ENCODE measurements at regions of chr17 and their contacts with region 1.

Region 1: GRCh38 chr17:43710101-43710500 is 48.4 kb upstream of the MEOX1 start:
- DNase-seq: no peak

Region 2: DNA sequence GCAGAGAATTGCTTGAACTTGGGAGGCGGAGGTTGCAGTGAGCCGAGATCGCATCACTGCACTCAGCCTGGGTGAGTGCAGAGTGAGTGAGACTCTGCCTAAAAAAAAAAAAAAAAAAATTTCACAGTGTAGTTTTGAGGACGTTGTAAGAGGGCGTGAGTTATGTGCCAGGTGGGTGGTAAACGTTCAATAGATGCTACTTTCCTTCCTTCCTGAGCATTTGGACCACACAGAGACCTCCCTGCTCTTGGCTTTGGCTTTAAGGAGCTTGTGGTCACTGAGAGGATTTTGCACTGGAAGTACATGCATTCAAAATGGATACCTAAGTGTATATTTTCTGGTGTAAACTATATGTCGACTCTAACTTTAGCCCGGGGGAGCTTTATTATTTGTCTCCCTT is 18.0 kb after region 1 on chr17:
- intact Hi-C with region 1: loop called (anchors 2 kb)
- DNase-seq: no peak